Dorsolateral prefrontal cortex (tissue), 120 donors: ENCODE measurements at regions of chr2 and their contacts with region 1.

Region 1: DNA sequence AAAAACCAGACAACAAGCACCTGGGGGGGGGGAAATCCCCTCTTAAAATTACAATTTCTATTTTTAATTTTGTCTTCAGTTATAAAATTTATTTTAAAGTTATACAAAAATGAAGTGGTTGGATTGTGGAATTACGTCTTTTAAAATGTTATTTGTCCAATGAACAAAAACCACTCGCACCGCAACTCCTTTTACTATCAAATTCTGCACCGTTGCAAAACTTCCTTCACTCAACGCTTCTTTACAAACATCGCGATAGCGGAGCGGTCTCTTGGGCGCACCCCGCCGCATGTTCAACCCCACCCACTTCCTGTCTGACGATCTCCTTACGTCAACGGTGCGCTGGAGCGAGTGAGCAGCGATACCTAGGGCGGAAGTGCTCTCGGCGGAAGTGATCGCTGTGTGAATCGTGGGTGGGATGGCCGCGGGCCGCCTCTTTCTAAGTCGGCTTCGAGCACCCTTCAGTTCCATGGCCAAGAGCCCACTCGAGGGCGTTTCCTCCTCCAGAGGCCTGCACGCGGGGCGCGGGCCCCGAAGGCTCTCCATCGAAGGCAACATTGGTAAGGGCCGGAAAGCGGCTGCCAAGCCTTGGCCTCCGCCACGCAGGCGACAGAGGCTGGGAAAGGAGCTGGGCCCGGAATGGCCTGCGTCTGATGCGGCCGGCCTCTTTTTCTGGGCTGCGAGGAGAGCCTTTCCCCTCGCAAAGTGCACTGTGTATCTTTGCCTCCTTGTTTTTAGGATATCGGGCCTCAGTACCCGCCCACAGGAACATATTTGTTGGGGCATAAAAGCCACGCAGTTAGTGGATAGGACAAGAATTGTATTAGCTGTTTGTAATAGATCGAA is at the start of gene DGUOK:
- DNase-seq: peak; percentile 92 to 99 (median 96)
- H3K4me3 ChIP-seq: peak within 1 kb of the TSS; percentile 65 to 98 (median 86)
- H3K27ac ChIP-seq: peak within 1 kb of the TSS; percentile 59 to 99 (median 90)
- H3K27me3 ChIP-seq: peaks cover 0 to 9% (median 0%) of the 10 kb centered on the region in 45 donors
- CTCF ChIP-seq: peak in 29 of 56 donors; percentile 2 to 56 (median 25)
- total RNA-seq, gene DGUOK: 29.0 to 56.8 (median 44.9) TPM

Region 2: GRCh38 chr2:73830871-73831401 is 95.8 kb before region 1 on chr2:
- intact Hi-C with region 1: loop called in 1 of 2 experiments (anchors 5 kb)
- DNase-seq: no peak
- H3K4me3 ChIP-seq: peak overlapping the region in 13 of 59 donors; percentile 2 to 96 (median 24)
- H3K27ac ChIP-seq: peak overlapping the region in 43 of 59 donors; percentile 4 to 99 (median 57)
- H3K27me3 ChIP-seq: no peaks in the 10 kb centered on the region
- CTCF ChIP-seq: no peak

Region 3: DNA sequence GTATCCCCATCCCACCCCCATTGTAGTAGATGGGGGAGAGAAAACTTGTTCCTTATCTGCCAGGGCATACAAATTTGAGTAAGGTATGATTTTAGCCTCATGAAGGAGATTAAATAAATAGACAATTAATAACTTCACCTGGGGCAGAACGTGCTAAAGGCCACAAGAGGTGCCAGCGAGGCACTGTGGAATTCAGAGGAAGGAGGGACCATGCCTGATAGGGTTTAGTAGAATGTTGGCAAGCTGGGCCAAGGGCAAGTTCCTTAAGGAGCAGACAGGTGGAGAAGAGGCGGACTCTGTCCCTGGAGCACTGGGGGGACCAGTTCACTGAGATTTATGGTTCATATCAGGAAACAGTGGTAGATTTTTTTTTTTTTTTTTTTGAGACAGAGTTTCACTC is 75.4 kb before region 1 on chr2:
- intact Hi-C with region 1: no loop called
- DNase-seq: no peak
- H3K4me3 ChIP-seq: no peak overlapping the region
- H3K27ac ChIP-seq: no peak overlapping the region
- H3K27me3 ChIP-seq: no peaks in the 10 kb centered on the region
- CTCF ChIP-seq: no peak

Region 4: GRCh38 chr2:73985308-73986084 is 58.8 kb after region 1 on chr2:
- intact Hi-C with region 1: loop called (anchors 2 to 5 kb)
- DNase-seq: peak in 1 of 10 donors; percentile 43
- H3K4me3 ChIP-seq: peak overlapping the region; percentile 29 to 78 (median 64)
- H3K27ac ChIP-seq: peak overlapping the region in 16 of 59 donors; percentile 5 to 79 (median 60)
- H3K27me3 ChIP-seq: no peaks in the 10 kb centered on the region
- CTCF ChIP-seq: peak in 1 of 56 donors; percentile 10

Region 5: DNA sequence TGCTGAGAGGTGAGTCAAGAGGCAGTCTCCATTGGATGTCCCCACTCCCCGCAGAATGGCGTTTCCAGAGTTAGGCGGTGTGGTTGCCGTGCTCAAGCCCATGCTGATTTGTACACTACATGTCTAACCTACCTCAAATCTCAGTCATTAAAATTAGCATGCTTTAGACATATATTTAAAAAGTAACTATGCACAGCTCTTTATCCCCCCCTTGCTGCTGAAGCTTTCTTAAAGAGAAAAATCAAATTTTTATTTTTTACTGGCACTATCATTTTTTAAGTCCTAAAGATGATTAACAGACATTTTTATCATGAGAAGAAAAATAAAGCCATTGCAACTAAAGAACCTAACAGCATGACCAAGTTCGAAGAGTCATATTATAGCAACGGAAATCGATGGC is 178.1 kb after region 1 on chr2:
- intact Hi-C with region 1: loop called in 1 of 2 experiments (anchors 10 kb)
- DNase-seq: no peak
- H3K4me3 ChIP-seq: no peak overlapping the region
- H3K27ac ChIP-seq: peak overlapping the region in 1 of 59 donors; percentile 14
- H3K27me3 ChIP-seq: no peaks in the 10 kb centered on the region
- CTCF ChIP-seq: peak in 49 of 56 donors; percentile 8 to 64 (median 38)